BJ (cell line): ENCODE measurements at regions of chr4 and their contacts with region 1.

Region 1: GRCh38 chr4:4541661-4542570 is at the start of gene STX18:
- DNase-seq: no peak
- H3K4me3 ChIP-seq: peak within 1 kb of the TSS; percentile 62
- H3K27me3 ChIP-seq: no peaks in the 10 kb centered on the region
- CTCF ChIP-seq: 0 out of 2 replicates have a peak, but pooled peaks have one; percentile 6
- polyA plus RNA-seq, gene STX18: 28.9 and 35.6 TPM in 2 replicates

Region 2: DNA sequence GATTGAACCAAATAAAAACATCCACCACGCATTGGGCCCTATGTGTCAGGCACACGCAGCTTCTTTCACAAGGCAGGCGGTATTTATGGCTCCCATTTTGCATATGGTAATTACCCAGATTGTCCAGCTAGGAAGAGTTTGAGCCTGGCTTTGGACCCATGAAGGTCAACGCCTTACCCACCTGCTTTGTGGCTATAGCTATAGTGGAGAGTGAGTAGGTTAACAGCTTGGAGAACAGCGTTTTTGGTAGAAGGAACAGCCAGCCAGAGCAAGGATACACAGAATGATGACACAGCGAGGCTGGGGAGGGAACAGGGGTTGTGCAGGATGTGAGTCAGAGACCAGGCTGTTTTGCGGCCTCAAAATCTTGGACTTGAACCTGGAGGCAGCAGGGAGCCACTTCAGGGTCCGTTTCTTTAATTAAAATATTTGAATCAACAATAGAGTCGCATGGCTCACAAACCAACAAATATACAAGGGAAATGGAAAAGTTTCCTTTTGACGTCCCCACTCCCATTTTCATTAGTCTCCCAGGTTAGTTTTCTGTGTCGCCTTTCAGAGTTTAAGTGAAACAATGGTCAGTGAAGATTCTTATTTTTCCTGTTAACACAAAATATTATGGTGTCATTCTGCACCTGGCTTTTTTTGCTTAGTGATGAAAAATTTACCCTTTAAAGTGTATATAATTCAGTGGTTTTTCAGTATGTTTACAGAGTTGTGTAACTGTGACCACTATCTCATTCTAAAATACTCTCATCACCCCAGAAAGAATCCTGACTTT is 118.1 kb after region 1 on chr4:
- CTCF ChIA-PET with region 1: interaction called, 3 read pairs
- POLR2A ChIA-PET with region 1: interaction called, 19 read pairs
- DNase-seq: peak; percentile 66
- H3K4me3 ChIP-seq: no peak overlapping the region
- H3K27me3 ChIP-seq: no peaks in the 10 kb centered on the region
- CTCF ChIP-seq: no peak